PC-9 (cell line): ENCODE measurements at regions of chr1 and their contacts with region 1.

Region 1: GRCh38 chr1:21200767-21201166 is 24.1 kb upstream of the EIF4G3 start:
- DNase-seq: no peak
- H3K4me3 ChIP-seq: no peak overlapping the region
- H3K27ac ChIP-seq: no peak overlapping the region
- H3K4me1 ChIP-seq: no peaks in the 10 kb centered on the region
- H3K27me3 ChIP-seq: no peaks in the 10 kb centered on the region
- CTCF ChIP-seq: no peak

Region 2: GRCh38 chr1:20867847-20868246 is 332.9 kb before region 1 on chr1:
- CTCF ChIA-PET with region 1: no interaction called
- POLR2A ChIA-PET with region 1: no interaction called
- intact Hi-C with region 1: loop called (anchors 1 kb)
- DNase-seq: no peak
- H3K4me3 ChIP-seq: no peak overlapping the region
- H3K27ac ChIP-seq: no peak overlapping the region
- H3K4me1 ChIP-seq: no peaks in the 10 kb centered on the region
- H3K27me3 ChIP-seq: no peaks in the 10 kb centered on the region
- CTCF ChIP-seq: no peak

Region 3: DNA sequence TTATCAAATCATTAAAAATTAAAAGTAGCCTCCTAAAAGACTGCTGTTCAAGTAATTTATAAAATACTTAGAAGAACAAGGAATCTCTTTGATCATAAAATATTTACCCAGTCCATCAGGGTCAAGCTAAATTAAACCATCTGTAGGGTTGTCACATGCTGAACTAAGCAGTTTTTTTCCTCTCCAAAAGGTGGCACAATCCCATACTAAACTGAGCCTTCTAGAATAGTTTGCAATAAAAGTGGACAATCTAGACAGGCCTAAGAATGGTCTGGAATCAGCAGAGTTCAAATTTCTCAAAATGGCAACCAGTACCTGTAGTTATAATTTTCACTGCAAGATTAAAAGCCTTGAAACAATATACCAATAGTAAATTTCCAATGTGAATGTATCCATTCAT is 218.9 kb before region 1 on chr1:
- CTCF ChIA-PET with region 1: no interaction called
- POLR2A ChIA-PET with region 1: no interaction called
- intact Hi-C with region 1: loop called (anchors 5 kb)
- DNase-seq: no peak
- H3K4me3 ChIP-seq: no peak overlapping the region
- H3K27ac ChIP-seq: no peak overlapping the region
- H3K4me1 ChIP-seq: no peaks in the 10 kb centered on the region
- H3K27me3 ChIP-seq: no peaks in the 10 kb centered on the region
- CTCF ChIP-seq: no peak

Region 4: GRCh38 chr1:21100481-21100921 is 100.3 kb before region 1 on chr1:
- CTCF ChIA-PET with region 1: no interaction called
- POLR2A ChIA-PET with region 1: no interaction called
- intact Hi-C with region 1: no loop called
- DNase-seq: no peak
- H3K4me3 ChIP-seq: no peak overlapping the region
- H3K27ac ChIP-seq: no peak overlapping the region
- H3K4me1 ChIP-seq: no peaks in the 10 kb centered on the region
- H3K27me3 ChIP-seq: no peaks in the 10 kb centered on the region
- CTCF ChIP-seq: no peak

Region 5: GRCh38 chr1:21216835-21217811 is 16.4 kb after region 1 on chr1:
- CTCF ChIA-PET with region 1: no interaction called
- POLR2A ChIA-PET with region 1: interaction called, 17 read pairs
- intact Hi-C with region 1: no loop called
- DNase-seq: peak in 1 of 2 experiments; percentile 37
- H3K4me3 ChIP-seq: no peak overlapping the region
- H3K27ac ChIP-seq: no peak overlapping the region
- H3K4me1 ChIP-seq: no peaks in the 10 kb centered on the region
- H3K27me3 ChIP-seq: no peaks in the 10 kb centered on the region
- CTCF ChIP-seq: peak; percentile 81